Heart left ventricle (tissue), 16 donors: ENCODE measurements at regions of chr4 and their contacts with region 1.

Region 1: GRCh38 chr4:165112368-165113139 is at the start of gene TMEM192:
- DNase-seq: peak; percentile 93 to 96 (median 94)
- ATAC-seq: peak; percentile 100
- H3K4me3 ChIP-seq: peak within 1 kb of the TSS; percentile 56 to 99 (median 84)
- H3K27ac ChIP-seq: peak within 1 kb of the TSS; percentile 52 to 94 (median 88)
- H3K4me1 ChIP-seq: peaks cover 0 to 16% (median 6%) of the 10 kb centered on the region in 12 donors
- H3K27me3 ChIP-seq: no peaks in the 10 kb centered on the region
- CTCF ChIP-seq: peak in 9 of 12 donors; percentile 17 to 64 (median 34)
- POLR2A ChIP-seq: peak in 1 of 2 donors; percentile 70
- total RNA-seq, gene TMEM192: 12.8 to 21.0 (median 17.7) TPM

Region 2: GRCh38 chr4:165207431-165208220 is 95.1 kb after region 1 on chr4 and contains the start of gene KLHL2:
- intact Hi-C with region 1: loop called in 2 of 10 experiments (anchors 2 to 5 kb)
- DNase-seq: peak; percentile 86 to 93 (median 88)
- ATAC-seq: peak; percentile 87 to 97 (median 96)
- H3K4me3 ChIP-seq: peak within 1 kb of the TSS; percentile 59 to 98 (median 86)
- H3K27ac ChIP-seq: peak within 1 kb of the TSS; percentile 70 to 90 (median 81)
- H3K4me1 ChIP-seq: peaks cover 0 to 61% (median 13%) of the 10 kb centered on the region in 12 donors
- H3K27me3 ChIP-seq: no peaks in the 10 kb centered on the region
- CTCF ChIP-seq: peak in 1 of 12 donors; percentile 19
- POLR2A ChIP-seq: peak in 1 of 2 donors; percentile 52
- total RNA-seq, gene KLHL2: 7.2 to 18.6 (median 10.8) TPM